ENCODE measurements at regions of chr22 and their contacts with region 1.

Region 1: DNA sequence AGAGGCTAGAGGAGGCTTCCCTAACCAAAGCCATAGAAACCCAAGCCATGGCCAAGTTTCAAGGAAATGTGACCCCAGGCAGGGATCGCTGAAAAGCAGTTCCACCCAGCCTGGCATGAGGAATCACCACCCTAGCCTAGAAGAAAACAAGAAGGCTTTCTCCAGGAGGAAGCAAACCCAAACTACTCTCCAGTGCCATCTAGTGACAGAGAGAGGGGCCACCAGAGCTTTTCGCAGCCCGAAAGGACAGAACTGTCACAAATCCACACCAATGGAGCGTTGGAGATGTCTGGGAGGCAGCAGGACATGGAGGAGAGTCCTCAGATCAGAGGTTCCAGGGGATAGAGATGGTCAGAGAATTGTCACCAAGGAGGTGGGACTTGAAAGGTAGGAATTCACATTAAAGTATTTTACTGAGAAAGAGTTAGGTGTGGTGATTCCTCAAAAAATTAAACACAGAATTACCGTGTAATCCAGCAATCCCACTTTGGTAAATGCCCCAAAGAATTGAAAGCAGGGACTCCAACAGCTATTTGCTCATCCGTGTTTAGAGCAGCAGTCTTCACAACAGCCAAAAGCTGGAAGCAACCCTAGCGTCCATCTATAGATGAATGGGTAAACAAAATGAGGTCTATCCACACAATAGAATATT is 67.3 kb upstream of the NUP50 start:
- DNase-seq: peak; percentile 72
- ATAC-seq: peak; percentile 77
- H3K4me3 Mint-ChIP-seq: no peak overlapping the region
- H3K27ac Mint-ChIP-seq: no peak overlapping the region
- H3K4me1 Mint-ChIP-seq: peaks cover 5% of the 10 kb centered on the region
- H3K27me3 Mint-ChIP-seq: peaks cover 24% of the 10 kb centered on the region

Region 2: DNA sequence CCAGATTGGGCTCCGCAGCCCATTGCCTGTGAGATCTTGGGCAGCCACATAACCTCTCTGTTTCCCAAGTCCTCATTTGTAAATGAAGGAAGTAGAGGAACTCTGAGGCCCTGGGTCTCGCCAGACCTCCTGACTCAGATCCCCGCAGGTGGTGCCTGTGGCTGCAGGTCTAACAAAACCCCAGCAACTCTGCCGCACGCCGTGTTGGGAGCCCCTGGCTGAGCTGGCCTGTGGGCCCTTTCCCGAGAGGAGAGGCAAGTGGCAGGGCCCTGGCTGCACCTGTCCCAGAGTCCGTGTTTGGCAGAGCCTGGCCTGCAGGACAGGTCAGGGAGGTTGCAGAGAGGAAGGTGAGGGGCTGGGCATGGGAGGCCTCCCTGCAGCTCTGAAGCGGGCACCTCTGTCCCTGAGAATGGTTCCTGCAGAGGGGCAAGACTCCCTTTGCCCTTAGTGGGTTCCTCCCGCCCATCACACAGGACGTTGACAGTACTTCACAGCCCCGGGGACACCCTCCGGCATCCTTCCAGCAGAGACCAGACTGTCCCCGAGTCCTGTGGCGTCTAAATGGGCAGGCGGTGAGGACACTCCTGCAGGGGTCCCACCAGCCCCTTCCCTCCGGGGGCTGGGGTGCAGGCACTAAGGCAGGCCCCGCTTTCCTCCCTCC is 276.3 kb before region 1 on chr22:
- CTCF ChIA-PET with region 1: interaction called, 4 read pairs
- POLR2A ChIA-PET with region 1: no interaction called
- intact Hi-C with region 1: loop called (anchors 1 kb)
- DNase-seq: no peak
- ATAC-seq: no peak
- H3K4me3 Mint-ChIP-seq: no peak overlapping the region
- H3K27ac Mint-ChIP-seq: no peak overlapping the region
- H3K4me1 Mint-ChIP-seq: no peaks in the 10 kb centered on the region
- H3K27me3 Mint-ChIP-seq: peaks cover 1% of the 10 kb centered on the region

Region 3: DNA sequence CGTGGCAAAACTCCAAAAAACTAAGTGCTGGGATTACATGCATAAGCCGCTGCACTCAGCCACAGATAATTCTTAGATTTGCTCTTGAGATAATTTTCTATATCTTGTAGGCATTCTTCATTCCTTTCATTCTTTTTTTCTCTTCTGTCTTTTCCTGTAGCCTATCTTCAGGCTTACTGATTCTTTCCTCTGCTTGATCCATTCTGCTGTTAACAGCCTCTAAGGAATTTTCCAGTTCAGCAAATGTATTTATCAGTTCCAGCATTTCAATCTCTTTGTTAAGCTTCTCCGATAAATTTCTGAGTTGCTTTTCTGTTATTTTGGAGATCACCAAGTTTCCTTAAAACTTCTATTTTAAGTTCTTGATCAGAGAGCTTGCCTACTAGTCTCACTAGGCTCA is 270.3 kb after region 1 on chr22:
- CTCF ChIA-PET with region 1: no interaction called
- POLR2A ChIA-PET with region 1: no interaction called
- intact Hi-C with region 1: no loop called
- DNase-seq: no peak
- ATAC-seq: no peak
- H3K4me3 Mint-ChIP-seq: no peak overlapping the region
- H3K27ac Mint-ChIP-seq: no peak overlapping the region
- H3K4me1 Mint-ChIP-seq: no peaks in the 10 kb centered on the region
- H3K27me3 Mint-ChIP-seq: peaks cover 5% of the 10 kb centered on the region